ENCODE measurements at regions of chr1 and their contacts with region 1.

Region 1: DNA sequence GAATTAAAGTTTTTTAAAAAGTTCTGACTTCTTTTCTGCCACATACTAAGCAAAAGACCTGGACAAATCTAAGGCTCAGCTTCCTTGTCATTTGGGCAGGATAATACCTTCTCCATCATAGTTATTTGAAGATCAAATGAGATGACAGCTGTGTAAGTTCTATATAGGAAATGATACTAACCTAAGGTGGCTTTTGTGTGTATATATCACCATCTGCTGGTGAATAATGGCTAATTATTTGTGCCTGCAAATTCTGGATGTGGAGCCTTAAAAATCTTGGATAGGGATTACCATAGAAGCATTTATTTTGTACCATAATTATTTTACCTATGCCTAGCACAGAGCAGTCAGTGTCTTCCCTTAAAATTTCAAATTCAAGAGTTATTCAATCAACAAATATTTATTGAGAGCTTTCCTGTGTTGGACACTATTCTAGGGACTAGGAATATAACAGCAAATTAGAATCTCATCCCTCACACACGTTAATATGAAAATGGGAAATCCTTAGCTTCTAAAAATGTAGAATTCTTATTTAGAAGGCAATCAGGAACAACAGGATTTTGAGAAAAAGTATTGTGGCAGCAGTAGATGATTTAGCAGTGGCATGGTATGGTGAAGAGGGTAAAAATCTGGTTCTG is 89.8 kb downstream of the TMEM200B start:
- DNase-seq: no peak
- H3K4me3 ChIP-seq: no peak overlapping the region
- H3K27ac ChIP-seq: no peak overlapping the region
- H3K4me1 ChIP-seq: no peaks in the 10 kb centered on the region
- H3K27me3 ChIP-seq: no peaks in the 10 kb centered on the region
- CTCF ChIP-seq: peak in 2 of 3 donors; percentile 78 to 80
- EP300 ChIP-seq: no peak
- POLR2A ChIP-seq: no peak

Region 2: GRCh38 chr1:28893403-28894102 is 140.4 kb before region 1 on chr1:
- intact Hi-C with region 1: loop called in 2 of 4 experiments (anchors 5 kb)
- DNase-seq: no peak
- H3K4me3 ChIP-seq: no peak overlapping the region
- H3K27ac ChIP-seq: no peak overlapping the region
- H3K4me1 ChIP-seq: peaks cover 2% of the 10 kb centered on the region
- H3K27me3 ChIP-seq: no peaks in the 10 kb centered on the region
- CTCF ChIP-seq: no peak
- EP300 ChIP-seq: no peak
- POLR2A ChIP-seq: no peak

Region 3: DNA sequence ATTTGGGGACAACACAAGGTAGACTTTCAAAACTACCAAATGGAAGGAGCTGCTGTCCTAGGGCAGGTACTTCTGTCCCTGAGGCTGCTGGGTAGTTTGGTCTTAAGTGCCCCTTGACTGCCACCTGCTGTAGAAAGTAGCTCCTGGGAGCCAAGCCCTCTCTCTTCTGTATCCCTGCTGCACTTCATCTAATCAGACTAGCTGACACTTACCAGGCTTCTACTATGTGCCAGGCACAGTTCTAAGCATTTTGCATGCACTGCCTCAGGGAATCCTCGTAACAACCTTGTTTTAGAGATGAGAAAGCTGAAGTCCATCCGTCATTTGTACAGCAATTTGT is 163.6 kb after region 1 on chr1:
- intact Hi-C with region 1: loop called in 3 of 4 experiments (anchors 5 to 10 kb)
- DNase-seq: peak in 1 of 5 donors; percentile 19
- H3K4me3 ChIP-seq: no peak overlapping the region
- H3K27ac ChIP-seq: no peak overlapping the region
- H3K4me1 ChIP-seq: no peaks in the 10 kb centered on the region
- H3K27me3 ChIP-seq: no peaks in the 10 kb centered on the region
- CTCF ChIP-seq: no peak
- EP300 ChIP-seq: no peak
- POLR2A ChIP-seq: no peak

Region 4: DNA sequence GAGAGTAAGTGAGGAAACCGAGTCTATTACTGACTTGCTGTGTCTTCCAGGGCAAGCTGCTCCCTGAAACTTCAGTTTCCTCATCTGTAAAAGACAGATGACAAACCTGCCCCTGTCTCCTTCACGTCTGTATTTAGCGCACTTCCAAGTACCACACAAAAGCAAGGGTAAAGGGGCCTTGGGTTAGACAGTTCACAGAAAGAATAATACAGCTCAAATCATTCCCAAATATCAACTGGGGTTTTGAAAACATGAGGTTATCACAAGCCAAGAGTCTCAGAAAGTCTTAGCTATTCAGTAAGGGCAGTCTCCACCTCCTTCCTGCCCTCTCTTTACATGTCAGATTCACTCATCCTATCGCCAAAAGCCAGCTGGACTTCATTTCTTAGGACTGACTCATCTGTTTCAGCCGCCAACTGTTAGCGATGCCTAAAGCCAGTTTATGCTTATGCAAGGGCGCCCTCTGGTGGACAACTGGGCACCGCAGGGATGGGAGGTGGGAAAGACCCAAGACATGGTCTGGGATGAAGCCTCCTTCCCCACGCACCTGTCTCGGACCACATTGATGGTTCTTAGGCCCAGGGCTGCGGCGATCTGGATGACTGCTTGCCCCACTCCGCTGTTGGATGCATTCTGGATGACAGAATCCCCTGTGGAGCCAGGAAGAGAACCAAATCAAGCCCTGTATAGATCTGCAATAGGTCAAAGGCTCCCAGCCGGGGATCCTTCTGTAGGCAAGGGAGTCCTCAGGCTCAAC is 168.8 kb after region 1 on chr1:
- intact Hi-C with region 1: loop called in 3 of 4 experiments (anchors 5 to 10 kb)
- DNase-seq: peak; percentile 96 to 98 (median 97)
- H3K4me3 ChIP-seq: no peak overlapping the region
- H3K27ac ChIP-seq: peak overlapping the region in 1 of 2 donors; percentile 80
- H3K4me1 ChIP-seq: no peaks in the 10 kb centered on the region
- H3K27me3 ChIP-seq: no peaks in the 10 kb centered on the region
- CTCF ChIP-seq: peak; percentile 92 to 97 (median 95)
- EP300 ChIP-seq: no peak
- POLR2A ChIP-seq: no peak